Activated CD4-positive, alpha-beta T cell treated with anti-CD3 and anti-CD28 coated beads for 36 hours (primary cell): ENCODE measurements at regions of chr4 and their contacts with region 1.

Region 1: GRCh38 chr4:47933840-47934239 is 19.5 kb upstream of the NFXL1 start:
- DNase-seq: no peak
- ATAC-seq: peak; percentile 49
- H3K4me3 Mint-ChIP-seq: no peak overlapping the region
- H3K27ac Mint-ChIP-seq: no peak overlapping the region
- H3K4me1 Mint-ChIP-seq: no peaks in the 10 kb centered on the region
- H3K27me3 Mint-ChIP-seq: peaks cover 1% of the 10 kb centered on the region

Region 2: DNA sequence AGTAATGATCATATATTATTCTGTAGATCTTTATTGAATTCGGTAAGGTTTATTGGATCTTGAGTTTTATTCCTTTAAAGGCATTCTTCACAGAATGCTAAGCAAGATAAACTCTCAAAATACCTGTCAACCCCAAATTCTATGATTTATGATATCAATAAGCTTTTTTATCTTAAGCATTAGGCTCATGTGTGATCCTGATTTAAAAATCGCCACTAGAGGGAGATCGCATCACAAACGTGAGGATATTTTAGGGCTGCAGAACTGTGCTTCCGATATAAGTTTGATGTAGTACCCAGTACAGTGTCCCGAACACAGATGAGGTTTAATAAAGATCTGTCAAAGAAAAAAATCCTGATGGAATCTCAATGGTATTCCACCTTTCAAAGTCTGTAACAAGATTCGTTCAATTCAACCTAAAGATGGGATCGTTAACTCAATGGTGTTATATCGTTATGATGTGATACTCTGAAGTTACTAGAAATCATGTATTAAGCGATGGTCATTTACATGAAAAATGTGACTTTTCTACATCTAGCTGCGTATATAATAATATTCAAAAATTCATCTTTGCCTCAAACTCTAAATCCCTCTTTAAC is 264.9 kb before region 1 on chr4:
- CTCF ChIA-PET with region 1: interaction called, 5 read pairs
- POLR2A ChIA-PET with region 1: no interaction called
- intact Hi-C with region 1: loop called (anchors 1 to 5 kb)
- DNase-seq: peak; percentile 15
- ATAC-seq: peak; percentile 47
- H3K4me3 Mint-ChIP-seq: no peak overlapping the region
- H3K27ac Mint-ChIP-seq: no peak overlapping the region
- H3K4me1 Mint-ChIP-seq: no peaks in the 10 kb centered on the region
- H3K27me3 Mint-ChIP-seq: peaks cover 17% of the 10 kb centered on the region

Region 3: GRCh38 chr4:47704693-47705325 is 229.0 kb before region 1 on chr4:
- CTCF ChIA-PET with region 1: interaction called, 19 read pairs
- POLR2A ChIA-PET with region 1: no interaction called
- intact Hi-C with region 1: loop called in 1 of 2 experiments (anchors 5 kb)
- DNase-seq: peak; percentile 44
- ATAC-seq: peak; percentile 58
- H3K4me3 Mint-ChIP-seq: no peak overlapping the region
- H3K27ac Mint-ChIP-seq: no peak overlapping the region
- H3K4me1 Mint-ChIP-seq: no peaks in the 10 kb centered on the region
- H3K27me3 Mint-ChIP-seq: peaks cover 17% of the 10 kb centered on the region

Region 4: GRCh38 chr4:48851651-48852050 is 917.8 kb after region 1 on chr4:
- CTCF ChIA-PET with region 1: no interaction called
- POLR2A ChIA-PET with region 1: no interaction called
- intact Hi-C with region 1: no loop called
- DNase-seq: no peak
- ATAC-seq: peak; percentile 86
- H3K4me3 Mint-ChIP-seq: no peak overlapping the region
- H3K27ac Mint-ChIP-seq: peak overlapping the region; percentile 64
- H3K4me1 Mint-ChIP-seq: peaks cover 15% of the 10 kb centered on the region
- H3K27me3 Mint-ChIP-seq: no peaks in the 10 kb centered on the region